Caco-2 (cell line): ENCODE measurements at regions of chr6 and their contacts with region 1.

Region 1: GRCh38 chr6:34115403-34115795 is 30.5 kb downstream of the GRM4 start:
- DNase-seq: peak in 1 of 2 experiments; percentile 62
- H3K4me3 ChIP-seq: no peak overlapping the region
- H3K4me3 Mint-ChIP-seq: no peak overlapping the region
- H3K27ac Mint-ChIP-seq: no peak overlapping the region
- H3K4me1 ChIP-seq: no peaks in the 10 kb centered on the region
- H3K4me1 Mint-ChIP-seq: no peaks in the 10 kb centered on the region
- H3K27me3 ChIP-seq: no peaks in the 10 kb centered on the region; the same call in 1 of the 2 replicates
- H3K27me3 Mint-ChIP-seq: peaks cover 26% of the 10 kb centered on the region
- CTCF ChIP-seq: no peak

Region 2: GRCh38 chr6:34055223-34055933 is 60.0 kb before region 1 on chr6:
- CTCF ChIA-PET with region 1: interaction called, 13 read pairs
- POLR2A ChIA-PET with region 1: no interaction called
- intact Hi-C with region 1: no loop called
- DNase-seq: peak; percentile 70 to 72
- H3K4me3 ChIP-seq: no peak overlapping the region
- H3K4me3 Mint-ChIP-seq: no peak overlapping the region
- H3K27ac Mint-ChIP-seq: no peak overlapping the region
- H3K4me1 ChIP-seq: no peaks in the 10 kb centered on the region
- H3K4me1 Mint-ChIP-seq: peaks cover 6% of the 10 kb centered on the region
- H3K27me3 ChIP-seq: no peaks in the 10 kb centered on the region
- H3K27me3 Mint-ChIP-seq: peaks cover 6% of the 10 kb centered on the region
- CTCF ChIP-seq: peak; percentile 77 to 92

Region 3: DNA sequence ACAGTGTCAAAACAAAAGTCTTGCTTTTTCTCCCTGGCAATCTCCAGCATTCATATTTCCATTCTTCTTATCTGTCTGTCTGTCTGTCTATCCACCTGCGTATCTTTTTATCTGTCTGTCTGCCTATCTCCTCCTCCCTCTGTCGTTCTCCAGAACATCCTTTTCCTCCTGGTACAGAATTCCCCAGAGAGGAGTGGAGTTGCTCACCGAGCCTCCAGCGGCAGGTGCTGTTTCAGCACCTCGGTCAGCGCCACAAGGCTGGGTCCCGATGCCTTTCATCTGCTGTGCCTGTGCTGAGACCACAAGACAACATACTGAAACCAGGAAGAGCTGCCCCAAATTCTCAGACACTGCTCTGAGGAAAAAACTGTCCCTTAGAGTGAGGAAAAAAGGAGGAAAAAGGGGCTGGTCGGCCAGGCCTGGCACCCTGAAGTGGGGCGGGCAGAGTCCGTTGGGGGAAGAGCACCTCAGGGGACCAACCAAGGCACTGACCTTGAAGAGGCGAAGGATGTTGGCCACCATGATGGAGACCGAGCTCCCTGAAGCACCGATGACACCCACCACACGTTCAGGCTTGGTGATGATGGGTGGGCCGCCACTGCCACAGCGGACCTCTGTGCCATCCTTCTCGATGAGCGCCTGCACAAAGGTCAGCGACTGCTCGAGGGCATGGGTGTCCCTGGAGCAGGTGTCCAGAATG is 17.2 kb after region 1 on chr6:
- CTCF ChIA-PET with region 1: no interaction called
- POLR2A ChIA-PET with region 1: no interaction called
- intact Hi-C with region 1: loop called (anchors 1 kb)
- DNase-seq: peak; percentile 55 to 81
- H3K4me3 ChIP-seq: no peak overlapping the region
- H3K4me3 Mint-ChIP-seq: no peak overlapping the region
- H3K27ac Mint-ChIP-seq: no peak overlapping the region
- H3K4me1 ChIP-seq: no peaks in the 10 kb centered on the region
- H3K4me1 Mint-ChIP-seq: no peaks in the 10 kb centered on the region
- H3K27me3 ChIP-seq: no peaks in the 10 kb centered on the region; the same call in 1 of the 2 replicates
- H3K27me3 Mint-ChIP-seq: peaks cover 15% of the 10 kb centered on the region
- CTCF ChIP-seq: no peak

Region 4: GRCh38 chr6:34205466-34205865 is 90.1 kb after region 1 on chr6:
- CTCF ChIA-PET with region 1: no interaction called
- POLR2A ChIA-PET with region 1: no interaction called
- intact Hi-C with region 1: no loop called
- DNase-seq: no peak
- H3K4me3 ChIP-seq: no peak overlapping the region
- H3K4me3 Mint-ChIP-seq: no peak overlapping the region
- H3K27ac Mint-ChIP-seq: no peak overlapping the region
- H3K4me1 ChIP-seq: no peaks in the 10 kb centered on the region
- H3K4me1 Mint-ChIP-seq: no peaks in the 10 kb centered on the region
- H3K27me3 ChIP-seq: no peaks in the 10 kb centered on the region
- H3K27me3 Mint-ChIP-seq: no peaks in the 10 kb centered on the region
- CTCF ChIP-seq: no peak

Region 5: GRCh38 chr6:34459899-34460593 is 344.6 kb after region 1 on chr6:
- CTCF ChIA-PET with region 1: no interaction called
- POLR2A ChIA-PET with region 1: no interaction called
- intact Hi-C with region 1: no loop called
- DNase-seq: peak in 1 of 2 experiments; percentile 55
- H3K4me3 ChIP-seq: no peak overlapping the region
- H3K4me3 Mint-ChIP-seq: no peak overlapping the region
- H3K27ac Mint-ChIP-seq: no peak overlapping the region
- H3K4me1 ChIP-seq: peaks cover 5% of the 10 kb centered on the region
- H3K4me1 Mint-ChIP-seq: peaks cover 12% of the 10 kb centered on the region
- H3K27me3 ChIP-seq: no peaks in the 10 kb centered on the region
- H3K27me3 Mint-ChIP-seq: no peaks in the 10 kb centered on the region
- CTCF ChIP-seq: peak; percentile 64 to 72